ENCODE measurements at regions of chr3 and their contacts with region 1.

Region 1: DNA sequence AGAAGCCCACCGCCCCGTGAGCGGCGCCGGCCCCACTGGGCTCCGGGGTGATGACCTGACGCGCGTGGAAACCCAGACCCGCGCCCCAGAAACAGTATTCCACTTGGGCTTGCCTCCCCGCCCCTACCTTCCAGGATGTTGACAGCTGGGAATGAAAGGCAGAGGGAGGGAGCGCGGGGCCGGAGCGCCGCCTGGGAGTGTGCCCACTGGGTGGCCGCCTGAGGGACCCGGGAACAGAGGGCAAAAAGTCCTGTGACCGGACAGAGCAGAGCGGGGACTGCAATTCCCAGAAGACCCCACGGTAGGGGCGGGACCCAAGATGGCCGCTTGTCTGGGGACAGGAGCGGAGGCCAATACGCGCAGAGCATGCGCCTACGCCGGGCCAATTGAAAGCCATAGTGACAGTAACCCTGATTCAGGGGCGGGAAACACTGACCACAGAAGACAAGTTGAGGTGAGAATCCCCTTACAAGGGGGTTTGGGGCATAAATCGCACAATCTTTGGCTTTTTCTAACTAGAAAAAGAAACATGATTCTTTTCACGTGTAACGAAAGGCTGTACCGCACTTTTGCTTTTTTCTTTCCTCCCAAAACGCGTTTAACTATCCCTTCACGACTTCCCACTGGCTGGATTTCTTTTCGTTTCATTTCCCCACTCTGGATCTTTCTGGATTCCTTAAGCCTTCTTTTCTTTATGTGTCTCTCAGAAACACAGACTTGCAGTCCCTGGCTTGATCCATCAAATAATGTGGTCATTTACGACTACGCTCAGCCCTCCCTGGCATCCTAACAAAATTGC is at the start of gene FHIT:
- DNase-seq: peak; percentile 91 to 98 (median 97)
- H3K4me3 ChIP-seq: peak within 1 kb of the TSS; percentile 64 to 99 (median 84)
- H3K27ac ChIP-seq: peak within 1 kb of the TSS; percentile 4 to 95 (median 85)
- H3K27me3 ChIP-seq: no peaks in the 10 kb centered on the region
- CTCF ChIP-seq: peak in 37 of 56 donors; percentile 8 to 53 (median 23)
- total RNA-seq, gene FHIT: 13.4 to 60.0 (median 32.6) TPM

Region 2: DNA sequence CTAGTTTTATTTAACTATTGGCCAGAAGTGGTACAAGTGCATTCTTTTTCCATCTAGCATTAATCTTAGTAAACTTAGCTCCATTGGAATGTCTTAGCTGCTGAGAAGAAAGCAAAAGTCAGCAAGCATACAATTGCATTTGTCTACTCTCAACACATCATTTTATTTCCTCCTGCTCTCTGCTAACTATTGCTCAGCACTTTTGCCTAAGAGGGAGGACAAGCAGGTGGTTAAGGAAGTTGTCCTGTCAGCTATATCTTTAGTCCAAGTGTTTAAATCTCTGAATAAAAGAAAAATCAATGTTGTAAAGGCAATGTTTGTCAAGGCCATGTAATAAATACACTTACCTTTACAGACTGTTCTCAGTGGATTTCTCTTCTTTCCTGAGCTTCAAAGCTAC is 51.1 kb before region 1 on chr3:
- intact Hi-C with region 1: no loop called
- DNase-seq: no peak
- H3K4me3 ChIP-seq: no peak overlapping the region
- H3K27ac ChIP-seq: no peak overlapping the region
- H3K27me3 ChIP-seq: no peaks in the 10 kb centered on the region
- CTCF ChIP-seq: no peak

Region 3: GRCh38 chr3:61288446-61288845 is 37.1 kb after region 1 on chr3:
- intact Hi-C with region 1: loop called in 1 of 2 experiments (anchors 2 kb)
- DNase-seq: peak in 3 of 10 donors; percentile 31 to 70 (median 53)
- H3K4me3 ChIP-seq: peak overlapping the region in 4 of 59 donors; percentile 0 to 19 (median 10)
- H3K27ac ChIP-seq: peak overlapping the region in 58 of 59 donors; percentile 2 to 95 (median 78)
- H3K27me3 ChIP-seq: no peaks in the 10 kb centered on the region
- CTCF ChIP-seq: peak in 3 of 56 donors; percentile 8 to 13 (median 12)

Region 4: DNA sequence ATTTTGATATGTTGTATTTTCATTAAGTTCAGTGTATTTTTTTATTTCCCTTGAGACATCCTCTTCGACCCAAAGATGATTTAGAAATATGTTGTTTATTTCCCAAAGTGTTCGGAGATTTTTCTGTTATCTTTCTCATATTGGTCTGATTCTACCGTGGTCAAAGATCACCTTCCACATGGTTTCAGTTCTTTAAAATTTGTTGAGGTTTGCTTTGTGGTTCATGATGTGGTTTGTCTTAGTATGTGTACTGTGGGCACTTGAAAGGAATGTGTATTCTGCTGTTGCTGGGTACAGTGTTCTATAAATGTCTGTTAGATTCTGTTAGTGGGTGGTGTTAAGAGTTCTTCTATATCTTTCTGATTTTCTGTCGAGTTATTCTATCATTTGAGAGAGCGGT is 103.2 kb after region 1 on chr3:
- intact Hi-C with region 1: loop called in 1 of 2 experiments (anchors 5 kb)
- DNase-seq: no peak
- H3K4me3 ChIP-seq: no peak overlapping the region
- H3K27ac ChIP-seq: no peak overlapping the region
- H3K27me3 ChIP-seq: no peaks in the 10 kb centered on the region
- CTCF ChIP-seq: no peak

Measured in dorsolateral prefrontal cortex (tissue), 120 donors.